SK-N-SH (cell line): ENCODE measurements at regions of chr11 and their contacts with region 1.

Region 1: DNA sequence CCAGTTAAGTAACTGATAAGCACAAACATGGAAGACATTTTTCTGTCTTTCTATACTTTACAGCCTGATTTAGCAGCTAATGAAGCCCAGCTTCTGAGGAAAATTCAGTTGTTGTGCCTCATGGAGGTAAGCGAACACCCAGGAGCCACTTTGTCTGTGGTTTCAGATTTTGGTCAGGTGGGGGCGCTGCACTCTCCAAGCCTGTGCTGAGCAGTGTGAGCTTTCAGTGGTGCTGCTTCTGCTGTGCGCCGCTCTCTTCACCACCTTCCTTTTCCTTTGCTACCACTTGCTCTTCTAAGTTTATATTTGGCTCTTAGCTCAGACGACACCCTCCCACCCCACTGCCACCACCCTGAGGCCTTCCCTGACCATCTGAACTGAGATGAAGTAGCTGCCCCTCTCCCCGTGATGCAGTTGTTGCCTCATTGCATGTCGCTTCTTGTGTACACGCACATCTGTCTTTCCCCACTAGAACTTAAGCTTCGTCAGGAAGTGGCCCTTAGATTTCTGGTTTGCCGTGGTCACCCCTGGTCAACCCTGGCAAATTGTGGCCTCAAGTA is 14.0 kb downstream of the PSMD13 start:
- DNase-seq: peak; percentile 66
- H3K4me3 ChIP-seq: no peak overlapping the region; a peak in 1 of 4 replicates
- H3K27ac ChIP-seq: no peak overlapping the region; a peak in 1 of 4 replicates
- H3K4me1 ChIP-seq: no peaks in the 10 kb centered on the region
- H3K27me3 ChIP-seq: no peaks in the 10 kb centered on the region
- CTCF ChIP-seq: peak; percentile 71
- EP300 ChIP-seq: no peak
- RAD21 ChIP-seq: peak; percentile 47

Region 2: DNA sequence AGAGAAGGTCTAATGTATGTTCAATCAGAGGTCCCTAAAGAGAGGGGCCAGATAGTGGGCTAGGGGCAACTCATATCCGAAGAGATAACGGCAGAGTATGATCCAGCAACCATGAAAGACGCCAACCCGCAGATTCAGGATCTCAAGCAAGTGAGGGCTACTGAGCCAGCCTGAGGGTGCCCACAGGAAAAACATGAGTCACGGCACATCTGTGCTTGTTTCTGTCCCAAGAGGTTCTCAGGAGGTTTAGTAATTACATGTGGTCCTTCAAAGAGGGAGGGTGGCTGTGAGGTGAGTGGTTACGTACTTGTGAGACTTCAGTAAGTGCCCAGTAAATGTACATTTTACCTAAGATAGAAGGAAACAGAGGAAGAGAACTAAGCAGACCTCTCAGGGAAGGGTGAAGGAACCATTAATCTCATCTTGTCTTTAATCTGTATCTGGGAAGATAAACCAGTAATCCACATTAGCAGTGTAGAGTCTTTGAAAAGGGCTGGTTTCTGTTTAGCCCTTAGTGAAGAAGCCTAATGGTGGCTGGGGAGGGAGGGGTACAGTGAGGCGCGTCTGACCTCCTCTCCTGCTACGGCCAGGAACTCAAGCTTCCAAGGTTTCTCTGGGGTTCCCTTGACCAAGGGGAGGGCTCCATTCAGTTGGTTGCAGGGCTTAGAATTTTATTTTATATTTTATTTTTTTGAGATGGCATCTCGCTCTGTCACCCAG is 24.9 kb before region 1 on chr11:
- CTCF ChIA-PET with region 1: interaction called, 20 read pairs
- POLR2A ChIA-PET with region 1: no interaction called
- DNase-seq: no peak
- H3K4me3 ChIP-seq: no peak overlapping the region
- H3K27ac ChIP-seq: no peak overlapping the region
- H3K4me1 ChIP-seq: no peaks in the 10 kb centered on the region
- H3K27me3 ChIP-seq: no peaks in the 10 kb centered on the region
- CTCF ChIP-seq: no peak
- EP300 ChIP-seq: no peak
- RAD21 ChIP-seq: no peak

Region 3: DNA sequence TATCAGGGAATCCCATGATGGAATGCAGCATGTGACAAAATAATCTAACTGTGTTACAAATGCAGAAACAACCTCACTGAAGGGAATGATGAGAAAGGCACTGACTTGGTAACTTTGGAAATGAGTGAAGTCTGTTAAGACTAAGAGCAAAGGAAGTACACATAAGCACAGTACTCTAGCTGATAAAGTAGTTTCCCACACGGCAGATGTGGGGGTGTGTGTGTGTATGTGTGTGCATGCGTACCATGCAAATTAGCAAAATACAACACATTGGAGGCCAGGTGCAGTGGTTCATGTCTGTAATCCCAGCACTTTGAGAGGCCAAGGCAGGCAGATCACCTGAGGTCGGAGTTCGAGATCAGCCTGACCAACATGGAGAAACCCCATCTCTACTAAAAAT is 10.8 kb after region 1 on chr11:
- CTCF ChIA-PET with region 1: interaction called, 12 read pairs
- POLR2A ChIA-PET with region 1: no interaction called
- DNase-seq: no peak
- H3K4me3 ChIP-seq: no peak overlapping the region
- H3K27ac ChIP-seq: no peak overlapping the region
- H3K4me1 ChIP-seq: no peaks in the 10 kb centered on the region
- H3K27me3 ChIP-seq: no peaks in the 10 kb centered on the region
- CTCF ChIP-seq: no peak
- EP300 ChIP-seq: no peak
- RAD21 ChIP-seq: no peak

Region 4: DNA sequence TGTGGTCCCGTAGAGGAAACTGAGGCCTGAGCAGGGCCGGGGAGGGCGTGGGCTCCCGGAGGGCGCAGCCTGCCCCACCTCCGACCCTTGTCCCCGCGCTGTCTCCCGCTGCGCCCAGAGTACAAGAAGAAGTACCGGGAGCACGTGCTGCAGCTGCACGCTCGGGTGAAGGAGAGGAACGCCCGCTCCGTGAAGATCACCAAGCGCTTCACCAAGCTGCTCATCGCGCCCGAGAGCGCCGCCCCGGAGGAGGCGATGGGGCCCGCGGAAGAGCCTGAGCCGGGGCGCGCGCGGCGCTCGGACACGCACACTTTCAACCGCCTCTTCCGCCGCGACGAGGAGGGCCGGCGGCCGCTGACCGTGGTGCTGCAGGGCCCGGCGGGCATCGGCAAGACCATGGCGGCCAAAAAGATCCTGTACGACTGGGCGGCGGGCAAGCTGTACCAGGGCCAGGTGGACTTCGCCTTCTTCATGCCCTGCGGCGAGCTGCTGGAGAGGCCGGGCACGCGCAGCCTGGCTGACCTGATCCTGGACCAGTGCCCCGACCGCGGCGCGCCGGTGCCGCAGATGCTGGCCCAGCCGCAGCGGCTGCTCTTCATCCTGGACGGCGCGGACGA is 29.3 kb after region 1 on chr11:
- CTCF ChIA-PET with region 1: interaction called, 16 read pairs
- POLR2A ChIA-PET with region 1: no interaction called
- DNase-seq: peak; percentile 48
- H3K4me3 ChIP-seq: no peak overlapping the region
- H3K27ac ChIP-seq: no peak overlapping the region
- H3K4me1 ChIP-seq: no peaks in the 10 kb centered on the region
- H3K27me3 ChIP-seq: peaks cover 56% of the 10 kb centered on the region
- CTCF ChIP-seq: no peak
- EP300 ChIP-seq: no peak
- RAD21 ChIP-seq: no peak

Region 5: DNA sequence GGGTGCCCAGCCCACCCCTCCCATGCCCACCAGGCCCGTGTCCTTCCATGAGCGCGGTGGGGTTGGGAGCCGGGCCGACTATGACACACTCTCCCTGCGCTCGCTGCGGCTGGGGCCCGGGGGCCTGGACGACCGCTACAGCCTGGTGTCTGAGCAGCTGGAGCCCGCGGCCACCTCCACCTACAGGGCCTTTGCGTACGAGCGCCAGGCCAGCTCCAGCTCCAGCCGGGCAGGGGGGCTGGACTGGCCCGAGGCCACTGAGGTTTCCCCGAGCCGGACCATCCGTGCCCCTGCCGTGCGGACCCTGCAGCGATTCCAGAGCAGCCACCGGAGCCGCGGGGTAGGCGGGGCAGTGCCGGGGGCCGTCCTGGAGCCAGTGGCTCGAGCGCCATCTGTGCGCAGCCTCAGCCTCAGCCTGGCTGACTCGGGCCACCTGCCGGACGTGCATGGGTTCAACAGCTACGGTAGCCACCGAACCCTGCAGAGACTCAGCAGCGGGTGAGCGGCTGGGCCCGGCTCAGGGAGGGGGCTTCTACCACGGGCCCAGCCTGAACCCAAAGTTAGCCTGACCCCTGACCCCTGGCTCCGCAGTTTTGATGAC is 146.2 kb after region 1 on chr11:
- CTCF ChIA-PET with region 1: interaction called, 10 read pairs
- POLR2A ChIA-PET with region 1: no interaction called
- DNase-seq: peak; percentile 95
- H3K4me3 ChIP-seq: peak overlapping the region; percentile 49 to 51
- H3K27ac ChIP-seq: no peak overlapping the region; a peak in 1 of 4 replicates
- H3K4me1 ChIP-seq: peaks cover 10 to 12% of the 10 kb centered on the region in 2 experiments; a peak in 3 of 4 replicates
- H3K27me3 ChIP-seq: peaks cover 9% of the 10 kb centered on the region; the same call in 1 of the 2 replicates
- CTCF ChIP-seq: peak; percentile 61
- EP300 ChIP-seq: no peak
- RAD21 ChIP-seq: peak; percentile 62